ENCODE measurements at regions of chr9 and their contacts with region 1.

Region 1: GRCh38 chr9:129177791-129178559 is at the start of gene IER5L:
- DNase-seq: peak; percentile 96 to 100 (median 100)
- ATAC-seq: peak; percentile 91
- H3K4me3 ChIP-seq: peak within 1 kb of the TSS; percentile 61
- H3K27ac ChIP-seq: peak within 1 kb of the TSS; percentile 49; the same call in 1 of the 3 replicates
- H3K4me1 ChIP-seq: peaks cover 19 to 64% of the 10 kb centered on the region in 2 experiments; a peak in 4 of 5 replicates
- H3K27me3 ChIP-seq: peaks cover 7 to 8% of the 10 kb centered on the region in 2 experiments; a peak in 3 of 5 replicates
- CTCF ChIP-seq: 0 out of 6 replicates have a peak, but pooled peaks of 1 of the 3 experiments have one; percentile 0
- EP300 ChIP-seq: no peak
- POLR2A ChIP-seq: peak; percentile 88
- RAD21 ChIP-seq: no peak; a peak in 1 of 4 replicates
- polyA plus RNA-seq, gene IER5L: 0.14 to 0.18 TPM

Region 2: DNA sequence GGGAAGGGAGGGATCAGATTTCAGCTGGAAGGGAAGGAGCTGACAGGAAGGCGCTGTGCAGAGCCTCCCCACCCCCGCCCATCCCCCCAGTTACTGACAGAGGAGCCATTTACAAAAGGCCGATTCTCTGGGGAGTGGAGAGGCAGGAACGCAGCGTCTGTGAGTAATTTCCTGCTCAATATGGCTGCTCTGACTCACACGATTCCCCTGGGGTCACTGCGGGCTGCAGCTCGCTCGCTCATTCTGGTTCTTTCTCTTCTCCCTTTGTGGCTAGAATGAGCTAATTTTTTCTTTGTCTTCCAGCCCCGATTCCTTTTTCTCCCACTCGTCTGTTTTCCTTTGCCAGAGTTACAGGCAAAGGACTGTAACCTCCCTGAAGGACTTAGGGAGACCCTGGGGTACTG is 38.0 kb before region 1 on chr9:
- CTCF ChIA-PET with region 1: interaction called, 6 read pairs
- POLR2A ChIA-PET with region 1: interaction called, 5 read pairs
- in situ Hi-C with region 1: no loop called
- intact Hi-C with region 1: loop called (anchors 2 kb)
- DNase-seq: peak; percentile 61 to 94 (median 74)
- ATAC-seq: peak; percentile 86
- H3K4me3 ChIP-seq: peak overlapping the region; percentile 27
- H3K27ac ChIP-seq: peak overlapping the region; percentile 93
- H3K4me1 ChIP-seq: peaks cover 30 to 49% of the 10 kb centered on the region in 2 experiments
- H3K27me3 ChIP-seq: no peaks in the 10 kb centered on the region
- CTCF ChIP-seq: no peak
- EP300 ChIP-seq: peak; percentile 67
- POLR2A ChIP-seq: peak; percentile 55
- RAD21 ChIP-seq: no peak

Region 3: GRCh38 chr9:129258124-129258822 is 80.3 kb after region 1 on chr9:
- CTCF ChIA-PET with region 1: no interaction called
- POLR2A ChIA-PET with region 1: no interaction called
- in situ Hi-C with region 1: no loop called
- intact Hi-C with region 1: loop called (anchors 5 kb)
- DNase-seq: peak; percentile 97 to 100 (median 100)
- ATAC-seq: peak; percentile 98
- H3K4me3 ChIP-seq: no peak overlapping the region
- H3K27ac ChIP-seq: no peak overlapping the region
- H3K4me1 ChIP-seq: peaks cover 13 to 35% of the 10 kb centered on the region in 2 experiments
- H3K27me3 ChIP-seq: peaks cover 0 to 18% of the 10 kb centered on the region in 2 experiments; a peak in 2 of 5 replicates
- CTCF ChIP-seq: no peak
- EP300 ChIP-seq: no peak
- POLR2A ChIP-seq: no peak
- RAD21 ChIP-seq: no peak

Region 4: GRCh38 chr9:129406278-129407225 is 228.6 kb after region 1 on chr9:
- CTCF ChIA-PET with region 1: no interaction called
- POLR2A ChIA-PET with region 1: no interaction called
- in situ Hi-C with region 1: loop called (anchors 10 kb)
- intact Hi-C with region 1: loop called (anchors 10 kb)
- DNase-seq: peak; percentile 94 to 96 (median 94)
- ATAC-seq: peak; percentile 97
- H3K4me3 ChIP-seq: peak overlapping the region; percentile 31
- H3K27ac ChIP-seq: peak overlapping the region; percentile 79
- H3K4me1 ChIP-seq: peaks cover 57 to 75% of the 10 kb centered on the region in 2 experiments
- H3K27me3 ChIP-seq: no peaks in the 10 kb centered on the region
- CTCF ChIP-seq: 0 out of 6 replicates have a peak, but pooled peaks of 1 of the 3 experiments have one; percentile 4
- EP300 ChIP-seq: peak; percentile 57
- POLR2A ChIP-seq: peak; percentile 86
- RAD21 ChIP-seq: 0 out of 4 replicates have a peak, but pooled peaks of 1 of the 2 experiments have one; percentile 7

Region 5: DNA sequence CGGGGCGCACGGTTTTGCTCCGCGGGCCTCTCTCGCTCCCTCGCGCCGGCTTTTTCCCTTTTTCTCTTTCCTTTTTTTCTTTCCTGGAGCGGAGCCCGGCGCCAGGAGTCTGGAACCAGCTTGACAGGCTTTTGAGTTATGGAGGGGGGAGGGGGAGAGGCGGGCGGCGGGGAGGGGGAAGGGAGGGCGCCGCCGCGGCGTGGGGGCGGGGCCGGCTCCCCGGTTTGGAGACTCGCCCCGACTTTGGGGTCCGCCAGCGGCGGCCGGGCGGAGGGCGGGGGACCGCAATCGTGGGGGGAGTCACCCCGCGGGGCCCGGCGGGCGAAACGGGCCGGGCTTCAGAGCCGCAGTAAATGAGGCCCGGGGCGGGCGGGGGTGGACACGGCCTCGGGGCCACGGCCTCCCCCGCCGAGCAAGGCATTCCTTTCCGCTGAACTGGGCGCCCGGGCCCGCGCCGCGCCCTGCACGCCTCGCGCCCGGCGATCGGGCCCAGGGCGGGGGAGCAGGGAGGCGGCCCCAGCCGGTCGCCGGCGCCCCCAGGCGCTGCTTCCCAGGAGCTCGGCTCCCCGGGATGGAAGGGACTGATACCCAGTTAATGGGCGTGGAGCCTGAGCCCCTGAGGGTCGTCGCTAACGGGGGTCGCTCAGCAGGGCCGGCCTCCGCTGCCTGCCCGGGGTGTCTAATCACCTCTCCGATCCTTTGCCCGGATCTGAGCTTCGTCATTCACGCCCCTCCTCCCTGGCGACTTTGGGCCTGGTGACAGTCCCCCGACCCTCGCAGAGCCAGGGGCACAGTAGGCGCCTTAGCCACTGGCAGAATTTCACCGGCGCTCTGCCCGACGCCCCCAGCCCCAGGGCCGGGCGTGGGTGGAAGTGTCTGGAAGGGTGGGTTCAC is 304.8 kb after region 1 on chr9:
- CTCF ChIA-PET with region 1: no interaction called
- POLR2A ChIA-PET with region 1: interaction called, 3 read pairs
- in situ Hi-C with region 1: loop called (anchors 10 kb)
- intact Hi-C with region 1: no loop called
- DNase-seq: peak; percentile 79 to 87 (median 85)
- ATAC-seq: peak; percentile 83
- H3K4me3 ChIP-seq: peak overlapping the region; percentile 56
- H3K27ac ChIP-seq: peak overlapping the region; percentile 83
- H3K4me1 ChIP-seq: peaks cover 70 to 85% of the 10 kb centered on the region in 2 experiments
- H3K27me3 ChIP-seq: no peaks in the 10 kb centered on the region
- CTCF ChIP-seq: no peak
- EP300 ChIP-seq: no peak
- POLR2A ChIP-seq: peak; percentile 34; the same call in 1 of the 2 replicates
- RAD21 ChIP-seq: peak in 1 of 2 experiments; percentile 36; a peak in 3 of 4 replicates

Measured in K562 (cell line).